IMR-90 (cell line): ENCODE measurements at regions of chr14 and their contacts with region 1.

Region 1: DNA sequence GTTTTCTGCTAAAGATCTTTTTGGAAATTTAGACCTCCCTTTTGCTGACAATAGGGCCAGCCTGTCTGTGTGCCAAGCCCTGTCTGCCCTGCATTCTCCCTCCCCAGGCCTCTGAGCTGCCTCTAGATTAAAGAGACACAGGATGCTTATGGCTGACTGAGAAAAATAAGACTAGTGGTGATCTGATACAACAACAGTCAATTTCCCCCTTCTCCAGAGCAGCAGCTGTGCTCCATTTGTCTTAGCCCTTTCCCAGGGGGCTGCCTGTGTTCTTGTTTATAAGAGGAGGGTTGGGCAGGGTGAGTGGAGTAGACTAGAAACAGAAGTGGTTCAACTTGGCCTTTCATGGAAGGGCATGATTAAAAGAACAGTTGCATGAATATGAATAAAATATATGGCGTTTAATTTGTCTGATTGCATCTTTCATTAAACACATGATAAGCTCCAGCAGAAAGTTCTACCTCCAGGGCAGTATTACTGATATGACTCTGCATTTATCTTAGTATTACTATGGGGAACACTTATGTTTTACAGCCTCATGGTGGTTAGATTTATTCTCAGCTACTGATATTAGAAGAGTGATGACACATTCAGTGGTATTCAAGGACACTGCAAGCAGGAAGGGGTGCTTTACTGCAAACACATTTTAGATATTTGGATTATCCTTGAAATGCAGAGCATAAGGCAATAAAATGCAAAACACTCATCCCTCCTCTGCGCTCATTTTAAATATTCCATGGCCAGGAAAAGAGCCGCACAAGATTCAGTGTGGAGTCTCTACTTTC is 150.2 kb upstream of the CLEC14A start:
- DNase-seq: peak; percentile 66
- ATAC-seq: peak; percentile 40
- H3K4me3 ChIP-seq: no peak overlapping the region
- H3K27ac ChIP-seq: peak overlapping the region; percentile 66
- H3K4me1 ChIP-seq: peaks cover 17% of the 10 kb centered on the region
- H3K27me3 ChIP-seq: no peaks in the 10 kb centered on the region
- CTCF ChIP-seq: no peak
- POLR2A ChIP-seq: no peak
- RAD21 ChIP-seq: no peak

Region 2: GRCh38 chr14:37746140-37746832 is 659.8 kb before region 1 on chr14:
- CTCF ChIA-PET with region 1: no interaction called
- POLR2A ChIA-PET with region 1: no interaction called
- dilution Hi-C with region 1: no loop called
- in situ Hi-C with region 1: no loop called
- intact Hi-C with region 1: no loop called
- DNase-seq: no peak
- ATAC-seq: no peak
- H3K4me3 ChIP-seq: no peak overlapping the region
- H3K27ac ChIP-seq: no peak overlapping the region
- H3K4me1 ChIP-seq: no peaks in the 10 kb centered on the region
- H3K27me3 ChIP-seq: no peaks in the 10 kb centered on the region
- CTCF ChIP-seq: no peak
- POLR2A ChIP-seq: no peak
- RAD21 ChIP-seq: no peak

Region 3: DNA sequence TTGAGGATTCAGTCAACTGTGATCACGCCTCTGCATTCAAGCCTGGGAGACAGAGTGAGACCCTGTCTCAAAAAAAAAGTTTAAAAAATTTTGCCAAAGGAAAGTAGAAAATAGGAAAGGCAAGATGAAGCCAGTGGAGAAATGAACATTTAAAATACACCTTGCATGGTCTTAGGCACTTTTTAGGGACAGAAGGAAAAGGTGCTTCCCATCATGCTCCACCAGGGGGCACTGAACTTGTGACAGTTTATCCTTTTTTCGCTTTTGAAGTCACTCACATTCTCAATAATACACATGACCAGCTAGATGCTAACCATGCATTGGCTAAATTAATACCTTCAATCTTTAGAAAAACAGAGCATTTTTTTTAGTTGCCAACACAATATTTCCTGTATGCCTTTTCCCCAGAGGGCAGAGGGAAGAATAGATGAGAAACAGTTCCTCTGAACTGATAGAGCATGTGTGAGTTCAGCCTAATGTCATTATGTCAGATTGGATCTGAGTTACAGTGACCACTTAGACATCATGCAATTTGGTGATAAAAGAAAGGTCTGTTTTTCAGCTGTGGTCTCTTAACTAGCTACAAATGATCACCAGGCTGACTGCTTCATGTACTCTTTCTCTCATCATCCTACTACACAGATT is 420.1 kb before region 1 on chr14:
- CTCF ChIA-PET with region 1: interaction called, 4 read pairs
- POLR2A ChIA-PET with region 1: no interaction called
- dilution Hi-C with region 1: no loop called
- in situ Hi-C with region 1: no loop called
- intact Hi-C with region 1: loop called (anchors 10 kb)
- DNase-seq: peak; percentile 65
- ATAC-seq: peak; percentile 62; the same call in 1 of the 2 replicates
- H3K4me3 ChIP-seq: no peak overlapping the region
- H3K27ac ChIP-seq: no peak overlapping the region
- H3K4me1 ChIP-seq: no peaks in the 10 kb centered on the region
- H3K27me3 ChIP-seq: no peaks in the 10 kb centered on the region
- CTCF ChIP-seq: peak; percentile 77
- POLR2A ChIP-seq: no peak
- RAD21 ChIP-seq: peak; percentile 70

Region 4: DNA sequence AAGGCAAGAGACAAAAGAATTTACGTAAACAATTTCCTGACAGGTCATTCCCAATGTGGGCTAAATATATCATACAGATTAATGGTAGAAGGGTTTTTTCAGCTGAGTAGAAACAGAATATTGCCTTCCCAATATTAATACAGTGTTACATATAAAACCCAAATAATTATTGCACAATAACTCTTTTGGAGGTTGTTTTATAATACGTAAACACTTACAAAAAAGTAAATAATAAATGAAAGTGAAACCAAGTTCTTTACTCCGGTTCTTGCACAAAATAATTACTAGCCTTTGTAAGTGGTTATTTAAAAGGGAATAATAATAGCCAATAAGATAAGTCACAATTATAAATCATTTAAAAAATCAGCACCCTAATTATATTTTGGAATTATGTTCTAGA is 316.9 kb before region 1 on chr14:
- CTCF ChIA-PET with region 1: no interaction called
- POLR2A ChIA-PET with region 1: no interaction called
- dilution Hi-C with region 1: no loop called
- in situ Hi-C with region 1: no loop called
- intact Hi-C with region 1: loop called (anchors 5 kb)
- DNase-seq: no peak
- ATAC-seq: no peak
- H3K4me3 ChIP-seq: no peak overlapping the region
- H3K27ac ChIP-seq: no peak overlapping the region
- H3K4me1 ChIP-seq: no peaks in the 10 kb centered on the region
- H3K27me3 ChIP-seq: no peaks in the 10 kb centered on the region
- CTCF ChIP-seq: no peak
- POLR2A ChIP-seq: no peak
- RAD21 ChIP-seq: no peak

Region 5: GRCh38 chr14:38254571-38255407 is 151.3 kb before region 1 on chr14:
- CTCF ChIA-PET with region 1: no interaction called
- POLR2A ChIA-PET with region 1: no interaction called
- dilution Hi-C with region 1: no loop called
- in situ Hi-C with region 1: no loop called
- intact Hi-C with region 1: loop called (anchors 5 kb)
- DNase-seq: no peak
- ATAC-seq: no peak
- H3K4me3 ChIP-seq: peak overlapping the region; percentile 31
- H3K27ac ChIP-seq: peak overlapping the region; percentile 27
- H3K4me1 ChIP-seq: peaks cover 2% of the 10 kb centered on the region; the same call in 1 of the 2 replicates
- H3K27me3 ChIP-seq: no peaks in the 10 kb centered on the region
- CTCF ChIP-seq: no peak
- POLR2A ChIP-seq: no peak
- RAD21 ChIP-seq: no peak

Region 6: GRCh38 chr14:38290601-38291190 is 115.3 kb before region 1 on chr14:
- CTCF ChIA-PET with region 1: interaction called, 5 read pairs
- POLR2A ChIA-PET with region 1: no interaction called
- dilution Hi-C with region 1: no loop called
- in situ Hi-C with region 1: no loop called
- intact Hi-C with region 1: loop called (anchors 1 kb)
- DNase-seq: peak; percentile 98
- ATAC-seq: peak; percentile 76
- H3K4me3 ChIP-seq: no peak overlapping the region
- H3K27ac ChIP-seq: peak overlapping the region; percentile 27; the same call in 1 of the 2 replicates
- H3K4me1 ChIP-seq: peaks cover 6% of the 10 kb centered on the region; the same call in 1 of the 2 replicates
- H3K27me3 ChIP-seq: no peaks in the 10 kb centered on the region
- CTCF ChIP-seq: no peak
- POLR2A ChIP-seq: no peak
- RAD21 ChIP-seq: no peak; the same call in 1 of the 2 replicates